ENCODE measurements at regions of chr9 and their contacts with region 1.

Region 1: DNA sequence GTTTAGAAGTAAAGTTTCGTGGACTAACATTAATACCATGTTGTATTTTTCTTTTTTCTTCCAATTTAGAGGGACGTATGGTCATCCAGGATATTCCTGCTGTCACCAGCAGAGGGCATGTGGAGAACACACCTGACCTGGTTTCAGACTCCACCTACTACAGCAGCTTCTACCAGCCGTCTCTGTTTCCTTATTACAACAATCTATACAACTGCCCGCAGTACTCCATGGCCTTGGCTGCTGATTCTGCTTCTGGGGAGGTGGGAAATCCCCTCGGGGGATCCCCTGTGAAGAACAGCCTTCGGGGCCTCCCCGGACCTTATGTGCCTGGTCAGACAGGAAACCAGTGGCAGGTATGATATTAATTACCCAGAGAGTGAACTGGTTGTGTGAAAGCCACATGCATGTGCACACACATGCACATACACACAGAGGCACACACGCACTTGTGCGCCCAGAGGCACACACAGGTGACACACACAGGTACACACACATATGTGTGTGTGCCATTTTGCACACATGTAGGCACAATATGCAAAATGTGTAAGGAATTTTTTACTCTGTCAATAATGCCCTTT is 52.4 kb downstream of the DMRT1 start:
- DNase-seq: peak in 2 of 3 donors; percentile 38 to 58
- ATAC-seq: peak; percentile 98 to 100 (median 98)
- H3K4me3 ChIP-seq: no peak overlapping the region
- H3K27ac ChIP-seq: no peak overlapping the region
- H3K4me1 ChIP-seq: peaks cover 0 to 5% (median 0%) of the 10 kb centered on the region in 4 donors
- H3K27me3 ChIP-seq: no peaks in the 10 kb centered on the region
- CTCF ChIP-seq: peak; percentile 69 to 84 (median 82)
- POLR2A ChIP-seq: no peak

Region 2: DNA sequence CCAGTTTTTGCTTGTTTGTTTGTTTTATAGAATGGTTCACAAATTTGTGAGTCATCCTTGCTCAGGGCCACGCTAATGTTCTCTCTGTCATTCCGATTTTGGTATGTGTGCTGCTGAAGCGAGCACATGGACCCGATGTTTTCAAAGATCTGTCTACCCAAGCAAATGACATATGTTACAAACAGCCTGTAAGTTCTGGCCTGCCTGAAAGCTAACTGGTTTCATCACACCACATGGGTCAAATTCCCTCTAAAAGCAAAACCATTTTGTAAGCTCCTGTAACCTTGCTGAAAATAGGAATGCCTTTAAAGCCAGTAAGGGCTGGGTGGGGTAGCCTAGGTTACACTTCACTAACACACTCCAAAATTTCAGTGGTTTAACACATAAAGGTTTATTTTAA is 107.9 kb after region 1 on chr9:
- intact Hi-C with region 1: loop called (anchors 5 kb)
- DNase-seq: no peak
- ATAC-seq: no peak
- H3K4me3 ChIP-seq: no peak overlapping the region
- H3K27ac ChIP-seq: no peak overlapping the region
- H3K4me1 ChIP-seq: no peaks in the 10 kb centered on the region
- H3K27me3 ChIP-seq: no peaks in the 10 kb centered on the region
- CTCF ChIP-seq: no peak
- POLR2A ChIP-seq: no peak

Region 3: GRCh38 chr9:1009101-1009707 is 115.3 kb after region 1 on chr9:
- intact Hi-C with region 1: loop called (anchors 5 kb)
- DNase-seq: peak; percentile 78 to 83 (median 82)
- ATAC-seq: peak; percentile 98 to 99 (median 99)
- H3K4me3 ChIP-seq: no peak overlapping the region
- H3K27ac ChIP-seq: no peak overlapping the region
- H3K4me1 ChIP-seq: no peaks in the 10 kb centered on the region
- H3K27me3 ChIP-seq: no peaks in the 10 kb centered on the region
- CTCF ChIP-seq: peak; percentile 95 to 100 (median 99)
- POLR2A ChIP-seq: no peak